ENCODE measurements at regions of chr6 and their contacts with region 1.

Region 1: DNA sequence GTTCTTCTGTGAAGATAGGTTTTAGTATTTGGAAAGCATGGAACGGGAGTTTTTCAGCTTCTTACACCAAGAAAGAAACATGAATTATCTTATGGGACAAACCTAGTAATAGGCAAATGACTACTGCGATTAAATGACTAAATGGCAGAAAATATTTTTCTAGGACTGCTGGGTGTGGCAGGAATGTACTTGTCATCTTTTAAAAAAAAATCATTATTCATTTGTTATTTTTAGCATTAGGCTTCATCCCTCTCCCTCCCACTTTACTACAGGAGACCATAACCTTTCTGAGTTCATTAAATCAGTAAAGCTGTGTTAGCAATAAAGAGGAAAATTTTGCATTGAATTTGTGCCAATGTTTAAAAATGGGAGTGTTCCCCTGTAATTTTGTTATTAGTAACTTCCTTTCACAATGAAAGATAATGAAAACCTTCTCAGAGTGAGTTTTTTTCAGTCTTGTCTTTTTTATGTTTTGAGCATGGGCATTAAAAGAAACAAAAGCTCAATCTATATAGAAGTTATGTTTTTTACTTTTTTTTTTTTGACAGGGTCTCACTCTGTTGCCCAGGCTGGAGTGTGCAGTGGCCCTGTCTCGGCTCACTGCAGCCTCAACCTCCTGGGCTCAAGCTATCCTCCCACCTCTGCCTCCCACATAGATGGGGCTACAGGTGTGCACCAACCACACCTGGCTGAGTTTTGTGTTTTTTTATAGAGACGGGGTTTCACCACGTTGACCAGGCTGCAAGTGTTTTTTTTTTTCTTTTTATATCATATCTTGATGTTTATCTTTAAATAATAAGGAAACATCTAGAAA is 105.6 kb upstream of the CLDN20 start:
- DNase-seq: no peak
- H3K4me3 ChIP-seq: no peak overlapping the region
- CTCF ChIP-seq: no peak

Region 2: DNA sequence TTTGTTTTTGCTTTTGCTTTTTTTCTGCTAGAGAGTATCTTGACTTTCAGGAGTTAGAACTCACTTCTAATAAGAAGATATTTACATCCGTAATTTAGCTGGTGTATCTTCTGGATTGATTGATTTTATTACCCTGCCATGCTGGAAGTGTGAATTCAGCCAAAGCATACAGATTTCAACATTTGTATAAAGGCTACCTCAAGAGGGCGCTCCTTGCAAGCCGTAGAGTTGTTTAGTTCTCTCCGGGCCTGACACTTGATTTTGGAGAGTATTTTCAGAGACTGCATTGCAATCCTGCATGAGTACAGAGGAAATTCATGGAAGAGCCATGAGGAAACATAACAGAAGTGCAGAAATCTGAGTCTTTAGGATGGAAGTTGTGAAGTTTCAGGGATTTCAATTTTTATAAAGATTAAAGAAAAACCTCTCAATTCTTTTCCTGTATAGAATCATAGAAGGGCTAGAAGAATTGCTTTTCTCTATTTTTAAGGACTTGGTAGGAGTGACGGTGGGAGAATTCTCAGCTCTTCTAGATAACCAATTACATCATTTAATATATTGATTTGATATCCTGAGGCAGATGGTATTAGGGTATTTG is 229.8 kb before region 1 on chr6:
- CTCF ChIA-PET with region 1: interaction called, 14 read pairs
- POLR2A ChIA-PET with region 1: no interaction called
- DNase-seq: no peak
- H3K4me3 ChIP-seq: no peak overlapping the region
- CTCF ChIP-seq: peak; percentile 53

Region 3: GRCh38 chr6:155132617-155133016 is 25.6 kb before region 1 on chr6:
- CTCF ChIA-PET with region 1: no interaction called
- POLR2A ChIA-PET with region 1: no interaction called
- DNase-seq: no peak
- H3K4me3 ChIP-seq: no peak overlapping the region
- CTCF ChIP-seq: no peak

Measured in AG04449 (cell line).